ENCODE measurements at regions of chr11 and their contacts with region 1.

Region 1: DNA sequence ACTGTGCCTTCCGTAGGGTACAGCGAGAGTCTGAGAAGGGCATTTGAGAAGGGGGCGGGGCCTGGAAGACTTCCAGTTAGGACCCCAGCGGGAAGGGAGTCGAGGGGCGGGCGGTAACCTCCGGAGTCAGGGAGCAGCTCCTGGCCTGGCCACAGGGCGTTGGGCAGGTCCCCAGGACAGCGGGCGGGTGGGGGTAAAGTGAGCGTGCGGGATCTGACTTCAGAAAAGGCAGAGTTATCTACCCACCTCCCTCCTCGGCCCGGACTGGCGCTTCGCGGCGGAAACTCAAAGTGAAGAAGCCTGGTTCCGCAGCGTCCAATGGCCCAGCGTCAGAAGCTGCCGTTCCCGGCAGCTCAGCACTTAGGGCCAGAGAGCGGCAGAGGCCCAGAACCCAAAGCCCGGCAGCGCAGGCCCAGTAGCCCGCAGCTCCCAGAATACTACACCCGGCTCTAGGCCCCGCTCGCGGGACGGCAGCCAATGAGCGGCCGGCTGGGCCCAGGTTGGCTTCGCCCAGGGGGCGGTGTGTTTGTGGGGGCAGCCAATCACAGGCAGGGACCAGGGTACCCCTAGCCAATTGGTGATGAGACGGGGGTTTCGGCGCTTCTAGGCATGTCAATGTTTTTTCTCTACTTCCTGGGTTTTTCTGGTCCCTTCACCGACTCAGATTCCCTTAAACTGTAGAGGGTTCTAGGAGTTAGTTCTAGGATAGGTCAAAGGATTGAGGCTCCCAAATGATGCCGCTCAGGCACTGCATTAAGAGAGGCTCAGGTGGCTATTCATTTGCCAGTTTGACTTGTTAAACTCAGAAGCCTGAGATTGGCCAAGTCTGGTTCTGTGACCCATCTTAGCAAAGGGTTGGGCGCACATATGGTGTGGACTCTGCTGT is at the start of gene TRIM68:
- DNase-seq: peak; percentile 94
- H3K4me3 Mint-ChIP-seq: peak within 1 kb of the TSS; percentile 92
- H3K27ac Mint-ChIP-seq: peak within 1 kb of the TSS; percentile 88
- H3K4me1 Mint-ChIP-seq: peaks cover 46% of the 10 kb centered on the region
- H3K27me3 Mint-ChIP-seq: no peaks in the 10 kb centered on the region
- total RNA-seq, gene TRIM68: 8.2 and 9.4 TPM in 2 replicates

Region 2: DNA sequence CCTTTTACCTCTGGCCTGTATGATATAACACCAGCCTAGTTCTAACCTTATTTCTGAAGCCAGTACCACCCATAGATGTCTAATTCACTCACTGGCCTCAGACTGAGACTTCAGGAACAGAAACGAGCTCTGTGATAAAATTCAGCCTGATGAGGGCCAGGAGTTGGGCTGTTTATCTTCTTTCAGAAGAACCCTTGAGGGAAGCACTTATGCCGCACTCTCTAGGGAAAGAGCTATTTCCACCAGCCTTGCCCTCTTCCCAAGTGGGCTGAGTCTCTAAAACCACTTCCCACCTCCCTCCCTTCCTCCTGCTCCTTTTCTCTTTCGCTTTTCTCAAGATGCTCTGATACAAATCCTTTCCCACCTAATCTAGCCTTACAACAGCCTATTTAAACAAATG is 237.9 kb before region 1 on chr11:
- intact Hi-C with region 1: no loop called
- DNase-seq: no peak
- H3K4me3 Mint-ChIP-seq: no peak overlapping the region
- H3K27ac Mint-ChIP-seq: no peak overlapping the region
- H3K4me1 Mint-ChIP-seq: no peaks in the 10 kb centered on the region
- H3K27me3 Mint-ChIP-seq: no peaks in the 10 kb centered on the region

Region 3: DNA sequence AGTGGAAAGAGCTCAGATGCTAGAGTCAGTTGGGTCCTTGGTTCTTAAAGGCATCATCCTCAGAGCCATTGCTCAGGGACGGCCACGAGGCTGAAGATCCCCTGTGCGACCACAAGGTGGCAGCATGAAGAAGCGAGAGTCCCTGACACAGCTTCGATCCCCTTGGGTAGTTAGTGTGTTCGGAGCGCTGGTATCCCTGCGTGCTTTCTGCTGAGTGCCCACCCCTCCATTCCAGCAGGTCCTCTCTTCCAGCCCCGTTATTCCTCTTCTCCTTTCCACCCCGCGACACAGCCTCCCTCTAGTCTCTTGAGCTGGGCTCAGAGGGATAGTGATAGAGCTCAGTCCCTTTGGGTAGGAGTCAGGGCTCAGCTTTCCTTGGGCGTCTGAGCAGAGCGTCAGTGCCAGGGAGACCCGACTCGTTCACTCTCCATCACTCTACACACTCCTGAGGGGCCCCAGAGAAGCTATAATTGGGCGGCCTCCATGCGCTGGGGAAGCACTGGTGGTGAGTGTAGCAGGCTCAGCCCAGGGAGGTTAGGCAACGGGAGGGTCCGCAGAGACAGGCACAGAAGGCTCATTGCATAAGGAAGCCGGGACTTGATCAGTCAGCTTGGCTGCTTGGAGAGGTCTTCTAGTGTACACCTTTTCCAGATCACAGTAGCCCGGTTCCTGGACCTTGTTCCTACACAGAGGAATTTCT is 29.1 kb after region 1 on chr11 and contains the start of gene OR51D1:
- intact Hi-C with region 1: loop called (anchors 2 kb)
- DNase-seq: peak; percentile 52
- H3K4me3 Mint-ChIP-seq: no peak within 1 kb of the TSS
- H3K27ac Mint-ChIP-seq: no peak within 1 kb of the TSS
- H3K4me1 Mint-ChIP-seq: no peaks in the 10 kb centered on the region
- H3K27me3 Mint-ChIP-seq: peaks cover 2% of the 10 kb centered on the region
- total RNA-seq, gene OR51D1: not detected in 2 replicates